Tibial artery (tissue), 4 donors: ENCODE measurements at regions of chr1 and their contacts with region 1.

Region 1: DNA sequence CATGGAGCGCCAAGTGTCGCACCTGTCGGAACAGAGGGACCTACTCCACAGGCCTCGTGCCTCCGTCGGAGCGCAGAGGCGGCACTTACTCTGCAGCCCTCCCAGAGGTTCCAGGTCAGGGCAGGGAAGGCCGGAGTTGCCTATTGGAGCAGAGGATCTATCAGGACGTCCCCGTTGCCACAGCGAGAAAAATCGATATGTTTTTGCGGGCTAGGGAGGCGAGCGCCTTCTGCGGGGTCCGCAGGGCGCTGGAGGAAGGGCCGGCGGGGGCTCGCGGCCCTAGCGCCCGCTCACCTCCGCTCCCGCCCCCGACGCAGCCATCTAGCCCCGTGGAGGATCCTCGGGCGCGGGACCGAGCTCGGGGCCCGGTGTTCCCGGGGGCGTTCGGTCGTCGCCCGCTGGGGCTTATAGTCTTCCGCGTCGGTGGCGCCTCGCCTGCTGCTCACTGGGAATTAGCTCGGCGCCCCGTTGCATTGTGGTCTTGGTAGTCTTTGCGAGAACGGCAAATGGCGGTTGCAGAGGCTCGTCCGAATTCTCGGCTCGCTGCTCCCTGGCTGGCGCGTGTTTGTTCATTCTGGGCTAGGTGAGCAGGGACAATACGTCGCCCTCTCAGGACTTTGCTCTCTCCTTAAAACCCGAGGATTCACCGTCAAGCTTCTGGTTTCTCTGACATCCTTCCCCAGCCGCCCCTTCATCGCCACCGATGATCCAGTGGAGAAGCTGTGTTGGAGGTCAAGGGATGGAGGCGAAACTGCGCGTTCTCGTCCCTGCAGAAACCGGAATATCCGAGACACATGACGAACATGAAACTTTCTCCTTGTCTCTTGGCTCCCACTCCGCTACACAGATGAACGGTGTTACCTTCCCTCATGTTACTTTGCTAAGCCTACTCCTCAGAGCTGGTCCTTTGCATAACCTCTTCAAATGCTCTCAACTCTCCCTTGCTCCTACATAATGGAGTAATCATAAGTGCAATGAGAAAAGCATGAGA is at the start of gene JTB:
- DNase-seq: peak; percentile 92 to 95
- H3K4me3 ChIP-seq: peak within 1 kb of the TSS; percentile 95 to 99
- H3K27ac ChIP-seq: peak within 1 kb of the TSS; percentile 95 to 97
- H3K4me1 ChIP-seq: peaks cover 0 to 23% (median 16%) of the 10 kb centered on the region in 4 donors
- H3K27me3 ChIP-seq: no peaks in the 10 kb centered on the region
- CTCF ChIP-seq: no peak

Region 2: DNA sequence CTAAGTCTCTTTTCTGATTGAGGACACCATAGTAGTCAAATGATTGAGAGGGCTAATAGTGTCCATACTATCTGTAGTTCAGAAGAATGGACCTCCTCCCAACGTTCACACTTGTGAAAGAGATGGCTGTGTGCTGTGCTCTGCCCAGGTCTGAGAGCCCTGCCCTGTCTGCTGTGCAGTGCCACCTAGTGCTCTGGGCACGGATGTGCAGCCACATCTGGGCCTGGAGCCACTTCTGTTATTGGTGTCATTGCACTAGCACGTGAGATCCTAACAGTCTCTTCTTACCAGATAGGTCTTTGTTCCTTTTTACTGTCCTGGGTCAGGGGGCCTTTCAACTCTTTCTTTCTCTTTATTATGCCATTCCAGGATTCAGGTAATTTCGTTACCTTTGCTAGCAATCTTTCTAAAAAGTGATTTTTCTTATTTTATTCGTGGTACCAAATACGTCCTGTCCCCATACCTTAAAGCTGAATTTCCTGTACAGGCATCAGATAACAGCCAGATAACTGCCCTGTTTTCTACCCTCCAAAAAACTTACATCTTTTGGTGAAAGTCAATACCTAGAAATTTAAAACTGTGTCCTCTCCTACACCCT is 228.0 kb before region 1 on chr1:
- intact Hi-C with region 1: no loop called
- DNase-seq: peak; percentile 92 to 96
- H3K4me3 ChIP-seq: no peak overlapping the region
- H3K27ac ChIP-seq: peak overlapping the region; percentile 81 to 85
- H3K4me1 ChIP-seq: peaks cover 0 to 73% (median 33%) of the 10 kb centered on the region in 4 donors
- H3K27me3 ChIP-seq: no peaks in the 10 kb centered on the region
- CTCF ChIP-seq: peak; percentile 93 to 96

Region 3: GRCh38 chr1:153790966-153791647 is 186.4 kb before region 1 on chr1:
- intact Hi-C with region 1: no loop called
- DNase-seq: peak in 1 of 2 donors; percentile 67
- H3K4me3 ChIP-seq: peak overlapping the region; percentile 45 to 48
- H3K27ac ChIP-seq: peak overlapping the region; percentile 91 to 93
- H3K4me1 ChIP-seq: peaks cover 0 to 24% (median 19%) of the 10 kb centered on the region in 4 donors
- H3K27me3 ChIP-seq: no peaks in the 10 kb centered on the region
- CTCF ChIP-seq: no peak

Region 4: DNA sequence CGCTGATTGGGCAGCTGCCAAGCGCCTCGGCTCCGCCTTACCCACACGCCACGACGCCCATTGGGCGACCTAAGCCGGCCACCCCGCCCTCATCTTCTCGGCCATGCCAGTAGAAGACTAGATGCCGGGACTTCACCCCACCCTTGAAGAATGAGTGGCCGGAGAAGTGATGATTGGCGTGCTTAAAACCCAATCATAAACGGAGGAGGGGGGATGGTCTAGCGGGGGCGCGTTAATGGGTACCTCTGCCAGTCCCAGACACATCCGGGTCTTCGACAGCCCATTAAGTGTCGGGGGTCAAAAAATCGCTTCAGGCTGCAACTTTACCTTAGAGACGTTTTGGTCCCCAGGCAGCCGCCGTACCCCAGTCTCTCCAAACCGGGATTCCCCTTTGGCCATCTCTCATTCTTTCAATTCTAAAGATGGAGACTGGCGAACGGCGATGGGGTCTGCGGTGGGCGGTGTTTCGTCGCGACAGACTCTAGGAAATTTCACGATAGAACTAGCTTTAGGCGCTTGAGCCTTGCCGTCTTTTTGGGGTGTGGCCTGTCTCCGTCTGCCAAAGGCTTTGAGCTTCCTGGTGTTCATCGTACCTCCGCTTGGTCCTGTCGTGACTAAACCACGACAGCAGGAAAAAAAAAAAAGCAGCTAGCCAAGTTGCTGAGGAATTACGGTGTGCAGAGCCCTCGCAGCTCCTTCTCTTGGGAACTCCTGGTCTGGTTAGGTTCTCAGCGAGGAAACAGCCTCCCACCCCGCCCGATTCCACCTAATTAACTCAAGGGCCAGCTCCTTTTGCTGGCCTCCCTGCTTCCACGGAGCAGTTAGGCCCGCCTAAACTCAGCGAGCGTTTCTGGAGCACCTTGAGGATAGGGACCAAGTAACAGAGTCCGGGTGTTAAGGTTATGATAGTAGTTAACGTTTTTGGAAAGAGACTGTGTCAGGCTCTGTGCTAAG is 54.3 kb before region 1 on chr1 and contains the start of gene GATAD2B:
- intact Hi-C with region 1: loop called (anchors 10 kb)
- DNase-seq: peak; percentile 100
- H3K4me3 ChIP-seq: peak within 1 kb of the TSS; percentile 98 to 100
- H3K27ac ChIP-seq: peak within 1 kb of the TSS; percentile 95 to 97
- H3K4me1 ChIP-seq: peaks cover 4 to 42% (median 32%) of the 10 kb centered on the region in 4 donors
- H3K27me3 ChIP-seq: no peaks in the 10 kb centered on the region
- CTCF ChIP-seq: peak in 1 of 2 experiments; percentile 15